ENCODE measurements at regions of chr22 and their contacts with region 1.

Region 1: GRCh38 chr22:41697126-41697775 is 2.1 kb upstream of the MEI1 start:
- DNase-seq: peak; percentile 31
- H3K4me3 ChIP-seq: peak overlapping the region; percentile 9; the same call in 1 of the 2 replicates
- CTCF ChIP-seq: peak; percentile 93

Region 2: GRCh38 chr22:41682033-41682807 is 15.0 kb before region 1 on chr22:
- CTCF ChIA-PET with region 1: interaction called, 91 read pairs
- POLR2A ChIA-PET with region 1: interaction called, 7 read pairs
- DNase-seq: peak; percentile 34
- H3K4me3 ChIP-seq: peak overlapping the region; percentile 79
- CTCF ChIP-seq: no peak

Region 3: GRCh38 chr22:41746567-41747400 is 49.5 kb after region 1 on chr22:
- CTCF ChIA-PET with region 1: interaction called, 55 read pairs
- POLR2A ChIA-PET with region 1: no interaction called
- DNase-seq: peak; percentile 42
- H3K4me3 ChIP-seq: no peak overlapping the region
- CTCF ChIP-seq: peak; percentile 91

Region 4: DNA sequence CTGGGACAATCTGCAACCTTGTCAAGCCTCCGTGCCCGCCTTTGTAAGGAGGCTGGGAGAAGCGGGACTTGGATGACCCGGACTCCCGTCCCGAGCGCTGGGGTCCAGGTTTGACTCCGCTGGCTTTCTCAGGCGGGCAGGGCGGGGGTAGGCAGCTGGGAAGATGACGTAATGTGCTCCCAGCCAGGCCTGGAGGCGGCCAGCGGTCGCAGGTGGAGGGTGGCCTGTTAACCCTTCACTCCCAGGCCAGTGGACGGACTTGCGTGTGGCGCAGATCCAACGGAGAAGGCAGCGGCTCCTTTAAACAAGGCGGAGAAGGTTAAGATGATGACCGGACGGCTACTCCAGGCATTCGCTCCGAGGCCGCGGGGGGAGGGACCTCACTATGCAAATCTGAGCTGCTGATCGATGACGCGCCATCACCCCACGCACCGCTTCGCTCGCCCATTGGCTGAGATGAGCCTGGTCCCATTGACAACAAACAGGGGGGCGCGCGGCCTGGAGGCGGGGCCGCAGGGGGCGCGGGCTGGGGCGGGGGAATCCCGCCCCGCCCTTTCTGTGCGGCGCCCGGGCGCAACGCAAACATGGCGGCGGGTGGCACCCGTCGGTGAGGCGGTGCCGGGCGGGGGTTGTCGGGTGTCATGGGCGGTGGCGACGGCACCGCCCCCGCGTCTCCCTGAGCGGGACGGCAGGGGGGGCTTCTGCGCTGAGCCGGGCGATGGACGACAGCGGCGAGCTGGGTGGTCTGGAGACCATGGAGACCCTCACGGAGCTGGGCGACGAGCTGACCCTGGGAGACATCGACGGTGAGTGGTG is 135.5 kb after region 1 on chr22 and contains the start of gene SREBF2:
- CTCF ChIA-PET with region 1: interaction called, 20 read pairs
- POLR2A ChIA-PET with region 1: no interaction called
- DNase-seq: peak; percentile 94
- H3K4me3 ChIP-seq: peak within 1 kb of the TSS; percentile 88
- CTCF ChIP-seq: no peak

Region 5: GRCh38 chr22:41940832-41941765 is 243.8 kb after region 1 on chr22:
- CTCF ChIA-PET with region 1: interaction called, 387 read pairs
- POLR2A ChIA-PET with region 1: interaction called, 3 read pairs
- DNase-seq: peak; percentile 52
- H3K4me3 ChIP-seq: no peak overlapping the region
- CTCF ChIP-seq: peak; percentile 93